CD14-positive monocyte (primary cell): ENCODE measurements at regions of chr17 and their contacts with region 1.

Region 1: DNA sequence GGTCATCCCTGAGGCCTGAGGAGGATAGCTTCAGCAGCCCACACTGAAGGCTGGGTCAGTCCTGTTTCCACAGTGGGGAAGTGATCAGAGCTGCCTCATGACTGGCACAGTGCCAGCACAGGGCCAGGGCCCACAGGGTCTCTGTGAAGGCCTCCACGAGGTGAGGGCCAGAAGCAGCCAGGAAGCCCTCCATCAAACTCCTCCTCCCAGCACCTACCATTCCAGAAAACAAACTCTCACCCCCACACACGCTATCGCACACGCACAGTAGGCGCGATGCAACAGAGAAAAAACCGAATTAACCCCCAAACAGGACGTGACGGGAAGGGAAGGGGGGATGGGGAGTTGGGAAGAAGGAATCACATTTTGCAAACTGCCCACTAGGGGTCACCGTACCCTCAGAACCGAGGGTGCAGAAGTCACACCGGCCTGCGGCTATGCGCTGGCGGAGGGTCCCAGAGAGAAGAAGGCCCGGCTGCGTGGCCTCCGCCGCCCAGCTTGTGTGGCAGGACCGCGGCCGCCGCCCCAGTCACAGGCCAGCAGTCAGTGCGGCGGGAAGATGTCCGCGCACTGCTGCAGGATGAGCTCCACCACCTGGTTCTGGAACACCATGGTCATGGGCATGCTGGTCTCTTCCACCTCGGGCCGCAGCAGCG is 37.6 kb downstream of the ARHGAP27 start:
- DNase-seq: peak; percentile 52 to 70 (median 60)
- H3K4me3 ChIP-seq: no peak overlapping the region
- H3K4me3 Mint-ChIP-seq: peak overlapping the region in 1 of 2 donors; percentile 53
- H3K27ac ChIP-seq: no peak overlapping the region
- H3K27ac Mint-ChIP-seq: peak overlapping the region in 2 of 7 donors; percentile 47 to 63
- H3K4me1 ChIP-seq: peaks cover 0 to 10% of the 10 kb centered on the region in 2 donors
- H3K4me1 Mint-ChIP-seq: peaks cover 17% of the 10 kb centered on the region
- H3K27me3 ChIP-seq: no peaks in the 10 kb centered on the region
- H3K27me3 Mint-ChIP-seq: peaks cover 2 to 7% (median 6%) of the 10 kb centered on the region in 3 donors
- CTCF ChIP-seq: peak; percentile 81

Region 2: GRCh38 chr17:45261577-45262515 is 133.2 kb before region 1 on chr17 and contains the start of gene SPATA32:
- intact Hi-C with region 1: no loop called
- DNase-seq: peak in 2 of 3 donors; percentile 30 to 33
- H3K4me3 ChIP-seq: peak within 1 kb of the TSS; percentile 47 to 85 (median 48)
- H3K4me3 Mint-ChIP-seq: peak within 1 kb of the TSS; percentile 88 to 92
- H3K27ac ChIP-seq: peak within 1 kb of the TSS in 1 of 2 donors; percentile 56
- H3K27ac Mint-ChIP-seq: peak within 1 kb of the TSS in 4 of 7 donors; percentile 24 to 64 (median 58)
- H3K4me1 ChIP-seq: peaks cover 7 to 31% of the 10 kb centered on the region in 2 donors
- H3K4me1 Mint-ChIP-seq: peaks cover 30% of the 10 kb centered on the region
- H3K27me3 ChIP-seq: peaks cover 0 to 5% of the 10 kb centered on the region in 2 donors
- H3K27me3 Mint-ChIP-seq: peaks cover 4 to 15% (median 8%) of the 10 kb centered on the region in 3 donors
- CTCF ChIP-seq: no peak
- polyA plus RNA-seq, gene SPATA32: not detected

Region 3: DNA sequence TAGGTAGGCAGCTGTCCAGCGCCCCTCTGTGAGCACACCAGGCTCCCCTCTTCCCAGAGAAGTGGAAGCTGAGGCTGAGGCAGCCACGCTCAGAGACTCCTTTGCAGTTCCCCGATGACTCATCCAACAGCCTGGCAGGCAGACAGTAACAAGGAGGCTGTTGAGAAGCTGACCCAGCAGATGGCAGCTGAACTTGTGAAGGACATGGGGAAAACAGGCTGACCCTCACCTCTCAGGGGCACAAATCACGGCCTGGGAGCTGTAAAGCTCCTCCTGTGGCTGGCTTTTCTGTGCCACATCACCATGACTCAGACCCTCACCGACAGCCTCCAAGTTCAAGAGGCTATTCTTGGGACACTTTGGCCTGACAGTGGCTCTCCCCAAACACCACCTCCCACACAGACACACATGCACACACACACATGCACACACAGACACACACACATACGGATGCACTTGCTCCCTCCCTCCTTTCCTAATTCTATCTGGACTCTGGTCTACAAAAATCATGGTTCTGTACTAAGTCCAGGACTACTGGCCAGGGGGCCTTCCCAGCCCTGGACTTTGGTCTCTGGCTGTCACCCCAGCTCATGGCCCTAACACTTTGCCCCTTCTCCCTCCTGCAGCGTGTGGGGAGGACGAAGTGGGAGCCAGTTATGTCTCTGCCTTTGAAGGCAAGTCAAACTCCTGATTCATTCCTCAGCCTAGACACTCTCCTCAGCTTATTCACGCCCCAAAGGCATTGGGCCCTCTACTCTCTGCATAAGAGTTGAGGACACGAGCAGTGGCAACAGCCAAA is 101.4 kb before region 1 on chr17:
- intact Hi-C with region 1: no loop called
- DNase-seq: peak; percentile 88 to 95 (median 94)
- H3K4me3 ChIP-seq: peak overlapping the region in 1 of 3 experiments; percentile 44
- H3K4me3 Mint-ChIP-seq: peak overlapping the region; percentile 20 to 57
- H3K27ac ChIP-seq: peak overlapping the region; percentile 34 to 77
- H3K27ac Mint-ChIP-seq: peak overlapping the region; percentile 85 to 94 (median 88)
- H3K4me1 ChIP-seq: peaks cover 86 to 89% of the 10 kb centered on the region in 2 donors
- H3K4me1 Mint-ChIP-seq: peaks cover 88% of the 10 kb centered on the region
- H3K27me3 ChIP-seq: no peaks in the 10 kb centered on the region
- H3K27me3 Mint-ChIP-seq: peaks cover 0 to 2% (median 0%) of the 10 kb centered on the region in 3 donors
- CTCF ChIP-seq: no peak

Region 4: GRCh38 chr17:45834471-45835396 is 439.7 kb after region 1 on chr17:
- intact Hi-C with region 1: loop called in 1 of 2 experiments (anchors 10 kb)
- DNase-seq: no peak
- H3K4me3 ChIP-seq: no peak overlapping the region
- H3K4me3 Mint-ChIP-seq: no peak overlapping the region
- H3K27ac ChIP-seq: no peak overlapping the region
- H3K27ac Mint-ChIP-seq: peak overlapping the region in 1 of 7 donors; percentile 4
- H3K4me1 ChIP-seq: no peaks in the 10 kb centered on the region
- H3K4me1 Mint-ChIP-seq: no peaks in the 10 kb centered on the region
- H3K27me3 ChIP-seq: no peaks in the 10 kb centered on the region
- H3K27me3 Mint-ChIP-seq: peaks cover 1 to 5% (median 4%) of the 10 kb centered on the region in 3 donors
- CTCF ChIP-seq: no peak